ENCODE measurements at regions of chr12 and their contacts with region 1.

Region 1: DNA sequence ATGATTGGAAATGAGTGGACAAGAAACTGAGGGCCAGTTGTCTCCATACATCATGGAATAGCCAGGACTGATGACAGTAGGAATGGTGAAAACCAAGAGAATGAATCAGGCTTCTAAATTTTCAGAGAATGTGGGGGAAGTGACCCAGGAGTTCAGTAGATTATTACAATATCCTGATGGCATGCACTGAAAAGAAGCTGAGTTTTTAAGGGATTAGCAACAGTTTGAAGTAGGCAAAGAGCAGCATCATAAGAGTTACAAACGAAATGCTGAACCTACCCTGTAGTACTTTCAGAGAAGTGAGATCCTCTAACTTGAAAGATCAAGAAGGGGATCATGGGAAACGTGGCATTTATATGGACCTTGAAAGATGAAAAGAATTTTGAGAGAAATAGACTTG is 13.2 kb downstream of the SLC2A14 start:
- DNase-seq: no peak
- H3K4me3 ChIP-seq: no peak overlapping the region
- H3K27ac ChIP-seq: no peak overlapping the region
- H3K4me1 ChIP-seq: peaks cover 11% of the 10 kb centered on the region
- H3K27me3 ChIP-seq: no peaks in the 10 kb centered on the region
- CTCF ChIP-seq: no peak

Region 2: GRCh38 chr12:7832059-7832696 is 27.4 kb before region 1 on chr12:
- CTCF ChIA-PET with region 1: no interaction called
- dilution Hi-C with region 1: no loop called
- in situ Hi-C with region 1: no loop called
- intact Hi-C with region 1: loop called (anchors 1 kb)
- DNase-seq: peak; percentile 22
- H3K4me3 ChIP-seq: no peak overlapping the region
- H3K27ac ChIP-seq: no peak overlapping the region
- H3K4me1 ChIP-seq: no peaks in the 10 kb centered on the region
- H3K27me3 ChIP-seq: no peaks in the 10 kb centered on the region
- CTCF ChIP-seq: peak; percentile 56 to 69

Region 3: DNA sequence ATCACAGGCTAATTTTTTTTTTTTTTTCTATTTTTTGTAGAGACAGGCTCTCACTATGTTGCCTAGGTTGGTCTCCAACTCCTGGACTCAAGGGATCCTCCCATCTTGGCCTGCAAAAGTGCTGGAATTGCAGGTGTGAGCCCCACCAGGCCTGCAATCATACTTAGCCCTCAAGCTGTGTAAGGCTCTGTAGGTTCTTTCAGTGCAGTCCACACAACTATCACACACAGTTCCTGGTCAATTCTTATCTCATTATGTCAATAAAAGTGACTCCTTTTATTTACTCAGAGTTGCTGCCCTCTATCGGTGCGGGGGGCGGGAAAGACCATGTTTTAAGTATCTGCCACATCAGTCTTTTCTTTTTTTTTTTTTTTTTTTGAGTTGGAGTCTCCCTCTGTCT is 47.5 kb after region 1 on chr12:
- CTCF ChIA-PET with region 1: no interaction called
- dilution Hi-C with region 1: loop called (anchors 5 kb)
- in situ Hi-C with region 1: no loop called
- intact Hi-C with region 1: no loop called
- DNase-seq: no peak
- H3K4me3 ChIP-seq: no peak overlapping the region
- H3K27ac ChIP-seq: no peak overlapping the region
- H3K4me1 ChIP-seq: no peaks in the 10 kb centered on the region
- H3K27me3 ChIP-seq: no peaks in the 10 kb centered on the region
- CTCF ChIP-seq: no peak

Region 4: GRCh38 chr12:7933255-7933729 is 73.7 kb after region 1 on chr12:
- CTCF ChIA-PET with region 1: interaction called, 11 read pairs
- dilution Hi-C with region 1: loop called (anchors 5 kb)
- in situ Hi-C with region 1: loop called in 1 of 2 experiments (anchors 10 kb)
- intact Hi-C with region 1: loop called (anchors 1 kb)
- DNase-seq: peak; percentile 85
- H3K4me3 ChIP-seq: peak overlapping the region; percentile 33 to 66 (median 64)
- H3K27ac ChIP-seq: peak overlapping the region; percentile 62
- H3K4me1 ChIP-seq: peaks cover 22% of the 10 kb centered on the region
- H3K27me3 ChIP-seq: no peaks in the 10 kb centered on the region
- CTCF ChIP-seq: peak; percentile 76 to 77

Region 5: GRCh38 chr12:7966563-7966962 is 107.0 kb after region 1 on chr12:
- CTCF ChIA-PET with region 1: no interaction called
- dilution Hi-C with region 1: loop called (anchors 5 kb)
- in situ Hi-C with region 1: no loop called
- intact Hi-C with region 1: no loop called
- DNase-seq: peak; percentile 67
- H3K4me3 ChIP-seq: no peak overlapping the region
- H3K27ac ChIP-seq: no peak overlapping the region
- H3K4me1 ChIP-seq: peaks cover 15% of the 10 kb centered on the region
- H3K27me3 ChIP-seq: no peaks in the 10 kb centered on the region
- CTCF ChIP-seq: peak in 1 of 2 donors; percentile 2

Region 6: GRCh38 chr12:7995266-7995963 is 135.9 kb after region 1 on chr12:
- CTCF ChIA-PET with region 1: no interaction called
- dilution Hi-C with region 1: no loop called
- in situ Hi-C with region 1: loop called (anchors 5 to 10 kb)
- intact Hi-C with region 1: loop called (anchors 1 kb)
- DNase-seq: peak; percentile 77
- H3K4me3 ChIP-seq: no peak overlapping the region
- H3K27ac ChIP-seq: peak overlapping the region; percentile 40
- H3K4me1 ChIP-seq: peaks cover 10% of the 10 kb centered on the region
- H3K27me3 ChIP-seq: no peaks in the 10 kb centered on the region
- CTCF ChIP-seq: peak; percentile 69 to 73

Region 7: GRCh38 chr12:8011331-8011730 is 151.8 kb after region 1 on chr12:
- CTCF ChIA-PET with region 1: no interaction called
- dilution Hi-C with region 1: no loop called
- in situ Hi-C with region 1: no loop called
- intact Hi-C with region 1: no loop called
- DNase-seq: peak; percentile 56
- H3K4me3 ChIP-seq: no peak overlapping the region
- H3K27ac ChIP-seq: no peak overlapping the region
- H3K4me1 ChIP-seq: no peaks in the 10 kb centered on the region
- H3K27me3 ChIP-seq: peaks cover 2% of the 10 kb centered on the region
- CTCF ChIP-seq: no peak

Region 8: DNA sequence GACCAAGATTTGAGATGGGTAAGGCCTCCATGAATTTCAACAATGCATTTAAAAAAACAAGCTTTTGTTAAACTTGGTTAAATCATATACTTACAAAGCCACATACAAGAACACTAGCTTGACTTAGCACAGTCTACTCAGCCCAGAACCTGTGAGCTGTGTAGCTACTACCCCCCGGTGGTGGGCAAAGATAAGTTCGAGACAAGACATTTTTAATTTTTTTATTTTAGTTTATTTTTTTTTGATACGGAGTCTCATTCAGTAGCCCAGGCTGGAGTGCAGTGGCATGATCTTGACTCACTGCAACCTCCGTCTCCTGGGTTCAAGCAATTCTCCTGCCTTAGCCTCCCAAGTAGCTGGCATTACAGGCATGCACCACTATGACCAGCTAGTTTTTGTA is 218.8 kb after region 1 on chr12:
- CTCF ChIA-PET with region 1: no interaction called
- dilution Hi-C with region 1: no loop called
- in situ Hi-C with region 1: no loop called
- intact Hi-C with region 1: loop called (anchors 1 kb)
- DNase-seq: peak; percentile 37
- H3K4me3 ChIP-seq: no peak overlapping the region
- H3K27ac ChIP-seq: no peak overlapping the region
- H3K4me1 ChIP-seq: peaks cover 24% of the 10 kb centered on the region
- H3K27me3 ChIP-seq: no peaks in the 10 kb centered on the region
- CTCF ChIP-seq: peak; percentile 17 to 35

Measured in mammary epithelial cell (primary cell).